Caco-2 (cell line): ENCODE measurements at regions of chr20 and their contacts with region 1.

Region 1: GRCh38 chr20:13325033-13325432 is 104.0 kb downstream of the ISM1 start:
- DNase-seq: peak; percentile 68 to 74
- H3K4me3 ChIP-seq: no peak overlapping the region
- H3K4me3 Mint-ChIP-seq: no peak overlapping the region
- H3K27ac Mint-ChIP-seq: no peak overlapping the region
- H3K4me1 ChIP-seq: peaks cover 34% of the 10 kb centered on the region
- H3K4me1 Mint-ChIP-seq: peaks cover 27% of the 10 kb centered on the region
- H3K27me3 ChIP-seq: no peaks in the 10 kb centered on the region
- H3K27me3 Mint-ChIP-seq: no peaks in the 10 kb centered on the region
- CTCF ChIP-seq: peak; percentile 61 to 76

Region 2: DNA sequence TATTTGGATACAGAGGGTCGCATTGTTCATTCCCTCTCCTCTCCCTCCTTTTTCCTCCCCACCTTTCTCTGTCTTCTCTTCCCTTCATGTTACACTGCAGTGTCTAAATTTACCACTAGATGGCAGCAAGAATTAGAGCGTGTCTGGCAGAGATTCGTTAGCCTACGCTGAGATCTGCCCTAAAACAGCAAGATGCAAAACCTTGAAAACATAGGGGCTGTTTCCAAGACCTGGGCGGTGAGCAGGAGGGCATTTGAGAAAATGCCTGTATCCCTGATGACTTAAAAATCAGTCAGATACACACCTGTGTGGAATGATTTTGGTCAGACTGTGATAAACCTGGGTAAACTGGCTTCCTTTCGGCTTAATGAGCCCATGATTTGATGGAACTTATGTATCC is 205.4 kb before region 1 on chr20:
- CTCF ChIA-PET with region 1: interaction called, 5 read pairs
- POLR2A ChIA-PET with region 1: no interaction called
- intact Hi-C with region 1: loop called (anchors 2 kb)
- DNase-seq: peak; percentile 52 to 80
- H3K4me3 ChIP-seq: no peak overlapping the region
- H3K4me3 Mint-ChIP-seq: no peak overlapping the region
- H3K27ac Mint-ChIP-seq: no peak overlapping the region
- H3K4me1 ChIP-seq: peaks cover 4% of the 10 kb centered on the region; the same call in 1 of the 2 replicates
- H3K4me1 Mint-ChIP-seq: no peaks in the 10 kb centered on the region
- H3K27me3 ChIP-seq: no peaks in the 10 kb centered on the region
- H3K27me3 Mint-ChIP-seq: no peaks in the 10 kb centered on the region
- CTCF ChIP-seq: peak; percentile 77 to 89

Region 3: GRCh38 chr20:13221673-13222318 is 103.2 kb before region 1 on chr20:
- CTCF ChIA-PET with region 1: no interaction called
- POLR2A ChIA-PET with region 1: no interaction called
- intact Hi-C with region 1: no loop called
- DNase-seq: peak; percentile 65 to 77
- H3K4me3 ChIP-seq: peak overlapping the region; percentile 54
- H3K4me3 Mint-ChIP-seq: peak overlapping the region; percentile 69
- H3K27ac Mint-ChIP-seq: no peak overlapping the region
- H3K4me1 ChIP-seq: peaks cover 10% of the 10 kb centered on the region
- H3K4me1 Mint-ChIP-seq: no peaks in the 10 kb centered on the region
- H3K27me3 ChIP-seq: no peaks in the 10 kb centered on the region; the same call in 1 of the 2 replicates
- H3K27me3 Mint-ChIP-seq: peaks cover 10% of the 10 kb centered on the region
- CTCF ChIP-seq: no peak

Region 4: DNA sequence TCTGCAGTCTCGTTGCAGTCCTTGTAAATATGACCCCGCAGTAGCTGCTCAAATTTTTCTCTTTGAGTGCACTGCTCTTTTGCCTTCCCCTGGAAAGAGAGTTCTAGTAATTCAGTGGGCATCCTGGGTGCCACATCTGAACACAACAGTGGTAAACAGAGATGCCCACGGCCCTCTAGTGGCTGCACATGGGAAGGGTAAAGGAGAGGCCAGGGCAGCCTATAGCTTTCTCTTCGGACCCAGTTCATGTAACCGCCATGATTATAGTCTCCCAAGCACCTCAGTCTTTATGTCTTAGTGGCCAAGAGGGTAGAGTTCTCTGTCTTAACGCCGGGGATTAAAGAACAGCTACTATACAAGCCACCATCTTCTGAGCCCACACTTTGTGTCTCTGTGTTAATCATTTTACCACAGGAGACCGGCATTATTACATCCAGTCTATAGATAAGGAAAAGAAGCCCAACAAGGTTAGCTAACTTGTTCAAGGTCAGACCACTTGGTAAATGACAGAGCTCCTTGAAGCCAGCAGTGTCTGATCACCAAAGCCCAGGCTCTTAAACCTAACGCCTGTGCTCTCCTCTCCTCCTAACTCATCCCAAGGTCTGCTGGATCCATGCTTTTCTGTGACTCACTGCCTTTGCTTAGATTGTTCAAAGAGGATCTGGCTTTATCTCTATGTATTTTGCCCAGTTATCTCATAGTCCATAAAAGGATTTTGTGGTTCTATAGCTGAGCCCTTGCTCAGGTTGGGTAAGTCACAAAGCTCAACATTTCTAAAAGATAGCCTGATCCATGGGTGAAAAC is 22.2 kb before region 1 on chr20:
- CTCF ChIA-PET with region 1: interaction called, 6 read pairs
- POLR2A ChIA-PET with region 1: no interaction called
- intact Hi-C with region 1: loop called (anchors 1 kb)
- DNase-seq: peak; percentile 62 to 71
- H3K4me3 ChIP-seq: no peak overlapping the region
- H3K4me3 Mint-ChIP-seq: peak overlapping the region; percentile 42
- H3K27ac Mint-ChIP-seq: peak overlapping the region; percentile 89
- H3K4me1 ChIP-seq: peaks cover 32% of the 10 kb centered on the region
- H3K4me1 Mint-ChIP-seq: peaks cover 18% of the 10 kb centered on the region
- H3K27me3 ChIP-seq: no peaks in the 10 kb centered on the region
- H3K27me3 Mint-ChIP-seq: no peaks in the 10 kb centered on the region
- CTCF ChIP-seq: peak; percentile 56 to 66

Region 5: DNA sequence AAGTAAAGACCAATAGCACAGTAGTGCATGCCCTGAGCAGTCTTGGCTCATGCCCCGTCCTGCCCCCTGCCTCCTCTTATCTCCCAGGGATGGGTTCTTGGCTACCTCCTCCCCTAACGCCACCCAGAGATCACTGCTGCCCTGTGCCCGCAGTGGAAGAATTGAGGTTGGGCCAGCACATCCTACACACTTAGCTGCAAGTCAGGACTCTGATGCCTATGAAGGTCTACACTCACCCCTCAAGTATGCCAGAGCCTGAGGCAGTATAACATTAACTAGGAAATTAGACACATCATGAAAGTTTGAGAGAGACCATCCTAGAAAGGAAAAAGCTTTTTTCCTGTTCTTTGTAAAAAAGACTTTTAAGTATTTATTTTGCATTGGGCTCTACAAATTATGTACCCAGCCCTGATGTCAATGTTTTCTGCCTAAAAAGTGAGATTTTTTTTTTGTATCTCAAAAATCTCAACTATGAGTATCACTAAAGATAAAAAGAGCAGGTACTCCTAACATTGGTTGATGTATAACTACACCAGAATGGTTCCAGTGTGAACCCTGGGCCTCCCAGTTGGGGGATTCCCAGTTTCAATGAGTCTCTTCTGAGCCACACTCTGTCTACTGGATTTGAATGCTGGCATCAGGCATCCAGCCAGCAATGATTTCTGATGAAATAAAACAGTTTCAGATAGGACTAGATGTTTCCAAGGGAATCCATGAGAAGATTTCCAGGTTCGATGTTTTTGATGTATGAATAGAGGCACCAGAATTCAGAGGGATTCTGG is 11.5 kb after region 1 on chr20:
- CTCF ChIA-PET with region 1: interaction called, 6 read pairs
- POLR2A ChIA-PET with region 1: interaction called, 5 read pairs
- intact Hi-C with region 1: loop called (anchors 2 kb)
- DNase-seq: peak; percentile 68 to 83
- H3K4me3 ChIP-seq: no peak overlapping the region
- H3K4me3 Mint-ChIP-seq: peak overlapping the region; percentile 64
- H3K27ac Mint-ChIP-seq: peak overlapping the region; percentile 98
- H3K4me1 ChIP-seq: peaks cover 99% of the 10 kb centered on the region
- H3K4me1 Mint-ChIP-seq: peaks cover 72% of the 10 kb centered on the region
- H3K27me3 ChIP-seq: no peaks in the 10 kb centered on the region
- H3K27me3 Mint-ChIP-seq: no peaks in the 10 kb centered on the region
- CTCF ChIP-seq: no peak

Region 6: GRCh38 chr20:13348311-13349234 is 23.5 kb after region 1 on chr20:
- CTCF ChIA-PET with region 1: no interaction called
- POLR2A ChIA-PET with region 1: interaction called, 14 read pairs
- intact Hi-C with region 1: no loop called
- DNase-seq: no peak
- H3K4me3 ChIP-seq: no peak overlapping the region
- H3K4me3 Mint-ChIP-seq: no peak overlapping the region
- H3K27ac Mint-ChIP-seq: no peak overlapping the region
- H3K4me1 ChIP-seq: no peaks in the 10 kb centered on the region
- H3K4me1 Mint-ChIP-seq: no peaks in the 10 kb centered on the region
- H3K27me3 ChIP-seq: no peaks in the 10 kb centered on the region
- H3K27me3 Mint-ChIP-seq: no peaks in the 10 kb centered on the region
- CTCF ChIP-seq: no peak

Region 7: GRCh38 chr20:13422637-13423036 is 97.6 kb after region 1 on chr20:
- CTCF ChIA-PET with region 1: no interaction called
- POLR2A ChIA-PET with region 1: no interaction called
- intact Hi-C with region 1: loop called (anchors 5 kb)
- DNase-seq: no peak
- H3K4me3 ChIP-seq: no peak overlapping the region
- H3K4me3 Mint-ChIP-seq: no peak overlapping the region
- H3K27ac Mint-ChIP-seq: no peak overlapping the region
- H3K4me1 ChIP-seq: peaks cover 46% of the 10 kb centered on the region
- H3K4me1 Mint-ChIP-seq: peaks cover 31% of the 10 kb centered on the region
- H3K27me3 ChIP-seq: no peaks in the 10 kb centered on the region
- H3K27me3 Mint-ChIP-seq: no peaks in the 10 kb centered on the region
- CTCF ChIP-seq: no peak

Region 8: GRCh38 chr20:13458860-13459451 is 133.9 kb after region 1 on chr20:
- CTCF ChIA-PET with region 1: no interaction called
- POLR2A ChIA-PET with region 1: no interaction called
- intact Hi-C with region 1: loop called (anchors 10 kb)
- DNase-seq: peak in 1 of 2 experiments; percentile 43
- H3K4me3 ChIP-seq: no peak overlapping the region
- H3K4me3 Mint-ChIP-seq: no peak overlapping the region
- H3K27ac Mint-ChIP-seq: no peak overlapping the region
- H3K4me1 ChIP-seq: no peaks in the 10 kb centered on the region
- H3K4me1 Mint-ChIP-seq: no peaks in the 10 kb centered on the region
- H3K27me3 ChIP-seq: no peaks in the 10 kb centered on the region
- H3K27me3 Mint-ChIP-seq: no peaks in the 10 kb centered on the region
- CTCF ChIP-seq: peak; percentile 76 to 86

Region 9: GRCh38 chr20:13659288-13659687 is 334.3 kb after region 1 on chr20:
- CTCF ChIA-PET with region 1: no interaction called
- POLR2A ChIA-PET with region 1: no interaction called
- intact Hi-C with region 1: no loop called
- DNase-seq: no peak
- H3K4me3 ChIP-seq: no peak overlapping the region
- H3K4me3 Mint-ChIP-seq: no peak overlapping the region
- H3K27ac Mint-ChIP-seq: no peak overlapping the region
- H3K4me1 ChIP-seq: no peaks in the 10 kb centered on the region
- H3K4me1 Mint-ChIP-seq: no peaks in the 10 kb centered on the region
- H3K27me3 ChIP-seq: no peaks in the 10 kb centered on the region
- H3K27me3 Mint-ChIP-seq: no peaks in the 10 kb centered on the region
- CTCF ChIP-seq: no peak